Activated CD8-positive, alpha-beta T cell treated with anti-CD3 and anti-CD28 coated beads, Interleukin-2, amount 10 ng/mL, durations not matched to agents 7 days and 5 days (primary cell): ENCODE measurements at regions of chr3 and their contacts with region 1.

Region 1: GRCh38 chr3:57397175-57398026 is 104.9 kb upstream of the ASB14 start:
- DNase-seq: peak; percentile 77
- ATAC-seq: peak; percentile 99
- H3K4me3 Mint-ChIP-seq: no peak overlapping the region
- H3K27ac Mint-ChIP-seq: peak overlapping the region; percentile 21
- H3K4me1 Mint-ChIP-seq: peaks cover 17% of the 10 kb centered on the region
- H3K27me3 Mint-ChIP-seq: peaks cover 17% of the 10 kb centered on the region

Region 2: GRCh38 chr3:57100046-57100695 is 297.2 kb before region 1 on chr3:
- CTCF ChIA-PET with region 1: interaction called, 11 read pairs
- POLR2A ChIA-PET with region 1: no interaction called
- DNase-seq: peak; percentile 76
- ATAC-seq: peak; percentile 85
- H3K4me3 Mint-ChIP-seq: no peak overlapping the region
- H3K27ac Mint-ChIP-seq: no peak overlapping the region
- H3K4me1 Mint-ChIP-seq: no peaks in the 10 kb centered on the region
- H3K27me3 Mint-ChIP-seq: peaks cover 10% of the 10 kb centered on the region

Region 3: GRCh38 chr3:57281715-57282114 is 115.7 kb before region 1 on chr3:
- CTCF ChIA-PET with region 1: no interaction called
- POLR2A ChIA-PET with region 1: no interaction called
- DNase-seq: no peak
- ATAC-seq: no peak
- H3K4me3 Mint-ChIP-seq: no peak overlapping the region
- H3K27ac Mint-ChIP-seq: no peak overlapping the region
- H3K4me1 Mint-ChIP-seq: no peaks in the 10 kb centered on the region
- H3K27me3 Mint-ChIP-seq: peaks cover 5% of the 10 kb centered on the region

Region 4: GRCh38 chr3:57382933-57383332 is 14.5 kb before region 1 on chr3:
- CTCF ChIA-PET with region 1: interaction called, 40 read pairs
- POLR2A ChIA-PET with region 1: no interaction called
- DNase-seq: no peak
- ATAC-seq: no peak
- H3K4me3 Mint-ChIP-seq: no peak overlapping the region
- H3K27ac Mint-ChIP-seq: no peak overlapping the region
- H3K4me1 Mint-ChIP-seq: no peaks in the 10 kb centered on the region
- H3K27me3 Mint-ChIP-seq: peaks cover 9% of the 10 kb centered on the region

Region 5: GRCh38 chr3:57542896-57543295 is 145.5 kb after region 1 on chr3:
- CTCF ChIA-PET with region 1: no interaction called
- POLR2A ChIA-PET with region 1: no interaction called
- DNase-seq: no peak
- ATAC-seq: no peak
- H3K4me3 Mint-ChIP-seq: no peak overlapping the region
- H3K27ac Mint-ChIP-seq: no peak overlapping the region
- H3K4me1 Mint-ChIP-seq: peaks cover 9% of the 10 kb centered on the region
- H3K27me3 Mint-ChIP-seq: peaks cover 2% of the 10 kb centered on the region

Region 6: DNA sequence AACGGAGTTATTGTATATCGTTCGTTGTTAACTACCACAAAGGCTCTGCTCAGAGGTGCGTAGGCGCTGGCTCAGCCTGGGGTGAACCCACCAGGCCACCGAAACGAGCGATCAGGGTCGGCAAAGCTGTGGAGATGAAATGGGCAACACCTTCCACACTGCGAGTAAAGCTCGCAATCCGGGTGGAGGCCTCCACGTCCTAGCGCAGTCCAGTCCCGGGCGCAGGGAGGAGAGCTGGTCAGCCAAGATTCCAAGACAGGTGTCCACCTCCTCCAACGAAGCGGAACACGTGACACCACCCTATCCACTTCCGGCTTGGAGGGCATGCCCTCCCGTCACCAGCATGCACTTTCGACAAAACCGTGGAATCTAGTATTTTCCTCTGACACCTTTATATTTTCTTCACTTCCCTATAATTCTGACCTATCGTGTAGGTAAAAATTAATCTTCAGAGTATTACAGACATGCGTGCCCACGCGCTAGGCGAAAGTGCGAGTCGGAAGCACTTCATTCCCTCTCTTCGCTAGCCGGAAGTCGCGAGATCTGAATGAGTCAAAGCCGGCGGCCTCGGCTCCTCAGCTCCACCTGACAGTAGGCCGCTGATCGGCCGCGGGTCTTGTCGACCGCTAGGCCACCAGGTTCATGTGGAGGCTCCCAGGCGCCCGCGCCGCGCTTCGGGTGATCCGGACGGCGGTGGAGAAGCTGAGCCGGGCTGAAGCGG is 158.5 kb after region 1 on chr3 and contains the start of gene PDE12:
- CTCF ChIA-PET with region 1: interaction called, 13 read pairs
- POLR2A ChIA-PET with region 1: interaction called, 3 read pairs
- DNase-seq: peak; percentile 88
- ATAC-seq: peak; percentile 82
- H3K4me3 Mint-ChIP-seq: peak within 1 kb of the TSS; percentile 98
- H3K27ac Mint-ChIP-seq: peak within 1 kb of the TSS; percentile 98
- H3K4me1 Mint-ChIP-seq: peaks cover 29% of the 10 kb centered on the region
- H3K27me3 Mint-ChIP-seq: no peaks in the 10 kb centered on the region
- total RNA-seq, gene PDE12: 27.8 to 31.2 TPM

Region 7: DNA sequence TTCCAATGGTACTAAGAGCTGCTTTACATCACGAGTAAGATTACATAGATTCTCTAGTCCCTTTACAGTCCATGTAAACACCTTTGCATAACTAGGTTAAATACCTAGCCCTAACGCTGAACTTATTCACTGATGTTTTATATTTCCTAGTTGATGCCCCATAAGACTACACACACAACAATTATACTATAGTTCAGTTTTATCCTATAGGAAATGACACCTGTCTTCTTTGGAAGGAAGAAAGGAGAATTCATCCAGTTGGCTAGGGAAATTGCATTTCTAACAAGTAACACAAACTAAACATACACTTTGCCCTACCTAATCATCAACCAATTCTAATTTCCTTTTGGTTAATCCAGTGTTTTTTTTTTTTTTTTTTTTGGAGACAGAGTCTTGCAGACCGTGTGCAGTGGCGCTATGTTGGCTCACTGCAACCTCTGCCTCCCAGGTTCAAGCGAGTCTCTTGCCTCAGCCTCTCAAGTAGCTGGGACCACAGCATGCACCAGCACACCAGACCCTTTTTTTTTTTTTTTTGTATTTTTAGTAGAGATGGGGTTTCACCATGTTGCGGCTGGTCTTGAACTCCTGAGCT is 172.6 kb after region 1 on chr3:
- CTCF ChIA-PET with region 1: no interaction called
- POLR2A ChIA-PET with region 1: no interaction called
- DNase-seq: no peak
- ATAC-seq: no peak
- H3K4me3 Mint-ChIP-seq: no peak overlapping the region
- H3K27ac Mint-ChIP-seq: no peak overlapping the region
- H3K4me1 Mint-ChIP-seq: no peaks in the 10 kb centered on the region
- H3K27me3 Mint-ChIP-seq: no peaks in the 10 kb centered on the region

Region 8: GRCh38 chr3:57852896-57853295 is 455.5 kb after region 1 on chr3:
- CTCF ChIA-PET with region 1: interaction called, 14 read pairs
- POLR2A ChIA-PET with region 1: no interaction called
- DNase-seq: no peak
- ATAC-seq: no peak
- H3K4me3 Mint-ChIP-seq: no peak overlapping the region
- H3K27ac Mint-ChIP-seq: no peak overlapping the region
- H3K4me1 Mint-ChIP-seq: no peaks in the 10 kb centered on the region
- H3K27me3 Mint-ChIP-seq: no peaks in the 10 kb centered on the region